Calu3 (cell line): ENCODE measurements at regions of chr16 and their contacts with region 1.

Region 1: DNA sequence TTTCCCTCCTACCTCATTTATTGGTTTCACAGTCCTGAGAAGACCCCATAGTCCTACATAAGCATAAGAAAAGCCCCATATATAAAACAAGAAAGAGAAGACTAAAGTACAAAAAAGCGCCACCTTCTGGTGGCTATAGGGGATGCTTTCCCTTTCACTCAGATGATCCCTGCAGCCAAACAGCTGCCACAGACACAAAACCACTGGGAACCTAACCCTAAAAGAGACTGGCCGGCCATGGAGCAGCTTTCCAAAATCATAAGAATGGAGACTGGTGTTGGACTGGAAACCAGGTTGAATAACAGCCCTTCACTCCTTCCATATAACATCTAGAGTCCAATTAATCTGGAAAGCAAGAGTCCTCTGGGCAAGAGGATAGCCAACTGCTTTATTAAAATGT is 11.4 kb downstream of the DYNC1LI2 start:
- DNase-seq: no peak
- H3K4me3 Mint-ChIP-seq: peak overlapping the region; percentile 25
- H3K27ac Mint-ChIP-seq: peak overlapping the region; percentile 89
- H3K4me1 Mint-ChIP-seq: peaks cover 34% of the 10 kb centered on the region
- H3K27me3 Mint-ChIP-seq: no peaks in the 10 kb centered on the region
- CTCF ChIP-seq: peak; percentile 69

Region 2: DNA sequence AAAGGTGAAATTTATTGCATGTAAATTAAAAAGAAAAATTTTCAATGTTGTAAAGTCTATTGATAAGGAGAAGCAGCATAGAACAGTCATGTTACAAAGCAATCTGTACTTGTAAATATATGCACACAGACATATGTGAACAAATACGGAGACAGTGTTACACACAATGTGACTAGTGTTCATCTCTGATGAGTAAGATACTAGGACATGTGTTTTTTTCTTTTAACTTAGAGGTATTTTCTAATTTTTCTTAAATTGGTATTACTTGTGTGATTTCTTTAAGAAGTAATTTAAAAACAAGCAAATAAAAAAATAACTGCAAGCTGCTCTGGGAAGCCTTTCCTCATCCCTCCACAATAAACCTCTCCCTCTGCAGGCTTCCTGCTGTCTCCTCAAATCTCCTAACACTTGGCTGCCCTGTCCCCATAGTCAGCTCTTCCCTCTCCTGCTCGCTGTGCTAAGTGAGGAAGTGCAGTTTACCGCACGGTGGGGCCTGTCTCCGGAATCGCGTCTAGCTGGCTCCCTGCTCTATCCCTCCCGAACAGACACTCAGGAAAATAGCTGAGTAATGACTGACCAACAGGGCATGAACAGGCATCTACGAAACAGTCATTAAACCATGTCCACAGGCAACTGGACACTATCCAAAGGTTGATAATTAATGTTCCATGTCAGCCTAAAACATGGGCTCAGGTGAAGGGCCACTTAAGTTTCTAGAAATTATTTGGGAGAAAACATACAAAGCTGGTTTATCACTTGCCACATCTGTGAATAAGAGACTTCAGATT is 79.4 kb before region 1 on chr16:
- CTCF ChIA-PET with region 1: interaction called, 10 read pairs
- intact Hi-C with region 1: no loop called
- DNase-seq: peak; percentile 51
- H3K4me3 Mint-ChIP-seq: peak overlapping the region; percentile 3
- H3K27ac Mint-ChIP-seq: no peak overlapping the region
- H3K4me1 Mint-ChIP-seq: peaks cover 10% of the 10 kb centered on the region
- H3K27me3 Mint-ChIP-seq: no peaks in the 10 kb centered on the region
- CTCF ChIP-seq: no peak

Region 3: GRCh38 chr16:66751303-66751991 is 11.4 kb after region 1 on chr16 and contains the start of gene DYNC1LI2:
- CTCF ChIA-PET with region 1: interaction called, 20 read pairs
- intact Hi-C with region 1: no loop called
- DNase-seq: peak; percentile 93
- H3K4me3 Mint-ChIP-seq: peak within 1 kb of the TSS; percentile 83
- H3K27ac Mint-ChIP-seq: peak within 1 kb of the TSS; percentile 74
- H3K4me1 Mint-ChIP-seq: peaks cover 32% of the 10 kb centered on the region
- H3K27me3 Mint-ChIP-seq: no peaks in the 10 kb centered on the region
- CTCF ChIP-seq: peak; percentile 93
- total RNA-seq, gene DYNC1LI2: 152 and 163 TPM in 2 replicates

Region 4: GRCh38 chr16:66830422-66831404 is 90.7 kb after region 1 on chr16 and contains the start of gene NAE1:
- CTCF ChIA-PET with region 1: interaction called, 17 read pairs
- intact Hi-C with region 1: no loop called
- DNase-seq: peak; percentile 95
- H3K4me3 Mint-ChIP-seq: peak within 1 kb of the TSS; percentile 71
- H3K27ac Mint-ChIP-seq: no peak within 1 kb of the TSS
- H3K4me1 Mint-ChIP-seq: no peaks in the 10 kb centered on the region
- H3K27me3 Mint-ChIP-seq: peaks cover 24% of the 10 kb centered on the region
- CTCF ChIP-seq: peak; percentile 97
- total RNA-seq, gene NAE1: 79.4 and 84.5 TPM in 2 replicates